ENCODE measurements at regions of chr1 and their contacts with region 1.

Region 1: GRCh38 chr1:61043010-61043820 is 39.1 kb upstream of the NFIA start:
- DNase-seq: peak; percentile 62
- H3K4me3 ChIP-seq: peak overlapping the region; percentile 52 to 56 (median 56)
- H3K27ac ChIP-seq: no peak overlapping the region
- H3K4me1 ChIP-seq: peaks cover 14% of the 10 kb centered on the region
- H3K27me3 ChIP-seq: no peaks in the 10 kb centered on the region
- CTCF ChIP-seq: peak; percentile 65 to 90

Region 2: GRCh38 chr1:59971464-59971911 is 1071.7 kb before region 1 on chr1:
- CTCF ChIA-PET with region 1: no interaction called
- dilution Hi-C with region 1: no loop called
- in situ Hi-C with region 1: no loop called
- intact Hi-C with region 1: loop called (anchors 2 kb)
- DNase-seq: peak; percentile 55
- H3K4me3 ChIP-seq: no peak overlapping the region
- H3K27ac ChIP-seq: no peak overlapping the region
- H3K4me1 ChIP-seq: no peaks in the 10 kb centered on the region
- H3K27me3 ChIP-seq: peaks cover 7% of the 10 kb centered on the region
- CTCF ChIP-seq: peak; percentile 83 to 93

Region 3: DNA sequence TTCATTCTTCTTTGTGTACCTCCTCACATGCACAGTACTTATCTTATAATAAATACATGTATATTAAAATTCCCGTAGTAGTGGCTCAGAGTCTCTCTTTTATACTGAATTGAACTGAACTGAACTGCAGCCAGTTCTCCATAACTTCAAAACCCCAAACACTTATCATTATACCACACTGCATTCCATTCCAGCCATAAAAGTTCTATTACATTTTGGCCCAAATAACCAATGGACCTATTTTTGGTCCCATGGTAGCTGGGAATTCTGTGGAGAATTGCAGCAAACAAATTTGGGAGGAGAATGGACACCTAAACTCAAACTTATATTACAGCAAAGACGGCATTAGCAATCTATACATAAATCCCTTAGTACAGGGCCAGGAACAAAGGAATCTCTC is 883.1 kb before region 1 on chr1:
- CTCF ChIA-PET with region 1: no interaction called
- dilution Hi-C with region 1: no loop called
- in situ Hi-C with region 1: no loop called
- intact Hi-C with region 1: loop called (anchors 1 kb)
- DNase-seq: no peak
- H3K4me3 ChIP-seq: no peak overlapping the region
- H3K27ac ChIP-seq: no peak overlapping the region
- H3K4me1 ChIP-seq: no peaks in the 10 kb centered on the region
- H3K27me3 ChIP-seq: peaks cover 14% of the 10 kb centered on the region
- CTCF ChIP-seq: no peak

Region 4: GRCh38 chr1:60848583-60849188 is 194.5 kb before region 1 on chr1:
- CTCF ChIA-PET with region 1: no interaction called
- dilution Hi-C with region 1: no loop called
- in situ Hi-C with region 1: no loop called
- intact Hi-C with region 1: loop called (anchors 1 kb)
- DNase-seq: peak; percentile 20
- H3K4me3 ChIP-seq: no peak overlapping the region
- H3K27ac ChIP-seq: no peak overlapping the region
- H3K4me1 ChIP-seq: peaks cover 5% of the 10 kb centered on the region
- H3K27me3 ChIP-seq: no peaks in the 10 kb centered on the region
- CTCF ChIP-seq: peak; percentile 45 to 71

Region 5: DNA sequence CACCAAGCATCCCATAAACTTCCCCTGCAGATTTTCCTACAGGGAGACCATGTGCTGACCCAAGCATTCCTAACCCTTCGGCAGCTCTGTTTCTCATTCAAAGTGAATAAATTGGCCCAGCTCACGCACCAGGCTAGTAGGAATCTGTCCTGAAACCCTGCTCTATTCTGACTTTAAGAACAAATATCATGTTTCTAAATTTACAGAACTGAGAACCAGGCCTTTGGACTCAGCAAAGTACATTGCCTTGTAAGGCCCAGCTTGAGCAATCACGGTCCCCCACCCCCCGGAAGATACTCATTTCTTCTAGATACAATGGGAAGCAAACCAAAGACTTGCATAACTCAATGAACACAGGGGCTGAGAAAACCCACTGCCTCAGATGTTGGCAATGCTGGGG is 120.9 kb before region 1 on chr1:
- CTCF ChIA-PET with region 1: no interaction called
- dilution Hi-C with region 1: no loop called
- in situ Hi-C with region 1: no loop called
- intact Hi-C with region 1: no loop called
- DNase-seq: no peak
- H3K4me3 ChIP-seq: no peak overlapping the region
- H3K27ac ChIP-seq: no peak overlapping the region
- H3K4me1 ChIP-seq: no peaks in the 10 kb centered on the region
- H3K27me3 ChIP-seq: no peaks in the 10 kb centered on the region
- CTCF ChIP-seq: no peak

Region 6: GRCh38 chr1:60969971-60970509 is 73.2 kb before region 1 on chr1:
- CTCF ChIA-PET with region 1: no interaction called
- dilution Hi-C with region 1: no loop called
- in situ Hi-C with region 1: loop called (anchors 5 to 10 kb)
- intact Hi-C with region 1: loop called (anchors 2 kb)
- DNase-seq: peak; percentile 46
- H3K4me3 ChIP-seq: no peak overlapping the region
- H3K27ac ChIP-seq: no peak overlapping the region
- H3K4me1 ChIP-seq: peaks cover 33% of the 10 kb centered on the region
- H3K27me3 ChIP-seq: no peaks in the 10 kb centered on the region
- CTCF ChIP-seq: peak; percentile 47 to 52

Region 7: DNA sequence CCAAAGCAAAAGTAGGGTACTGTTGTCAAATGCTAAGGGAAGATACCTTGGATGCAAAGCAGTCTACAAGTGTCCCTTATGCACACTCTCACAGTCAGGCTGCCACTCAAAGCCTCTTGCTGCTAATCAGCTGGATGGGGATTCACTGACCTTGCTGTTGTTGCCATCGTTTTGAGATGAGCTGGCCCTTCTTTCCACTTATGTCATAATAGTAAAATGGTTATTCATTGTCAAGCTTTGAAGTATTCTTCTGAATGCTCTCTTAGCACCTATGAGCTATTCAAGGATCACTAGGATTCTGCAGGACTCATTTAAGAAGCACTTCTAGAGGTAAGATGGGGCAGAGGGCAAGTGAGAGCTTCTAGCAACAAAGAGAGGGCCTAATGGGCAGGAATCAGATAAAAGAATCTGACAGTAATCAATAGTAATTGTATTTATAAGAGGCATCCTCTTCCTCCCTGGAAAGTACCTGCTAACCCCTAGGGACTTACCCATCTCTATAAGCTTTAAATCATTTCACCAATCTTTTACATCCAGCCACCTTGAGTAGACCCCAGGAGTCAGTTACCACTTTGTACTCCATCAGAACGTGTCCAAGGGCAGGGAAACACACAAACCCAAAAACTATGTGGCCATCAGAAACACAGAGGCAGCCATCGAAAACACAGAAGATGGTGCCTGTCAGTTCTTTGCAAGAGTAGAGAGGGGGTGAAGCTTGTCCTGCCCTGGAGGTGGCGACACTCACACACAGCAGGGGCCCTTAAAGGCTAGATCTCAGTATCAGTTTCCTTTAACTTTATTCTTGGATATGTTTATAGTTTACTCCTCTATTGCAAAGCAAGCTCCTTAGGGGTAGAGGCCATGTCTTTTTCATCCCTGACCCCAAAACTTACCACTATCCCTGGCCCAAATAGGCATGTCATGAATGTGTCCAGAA is 64.5 kb before region 1 on chr1:
- CTCF ChIA-PET with region 1: no interaction called
- dilution Hi-C with region 1: no loop called
- in situ Hi-C with region 1: loop called (anchors 5 to 10 kb)
- intact Hi-C with region 1: loop called (anchors 1 kb)
- DNase-seq: peak; percentile 38
- H3K4me3 ChIP-seq: no peak overlapping the region
- H3K27ac ChIP-seq: no peak overlapping the region
- H3K4me1 ChIP-seq: peaks cover 4% of the 10 kb centered on the region
- H3K27me3 ChIP-seq: no peaks in the 10 kb centered on the region
- CTCF ChIP-seq: peak; percentile 89 to 90

Region 8: DNA sequence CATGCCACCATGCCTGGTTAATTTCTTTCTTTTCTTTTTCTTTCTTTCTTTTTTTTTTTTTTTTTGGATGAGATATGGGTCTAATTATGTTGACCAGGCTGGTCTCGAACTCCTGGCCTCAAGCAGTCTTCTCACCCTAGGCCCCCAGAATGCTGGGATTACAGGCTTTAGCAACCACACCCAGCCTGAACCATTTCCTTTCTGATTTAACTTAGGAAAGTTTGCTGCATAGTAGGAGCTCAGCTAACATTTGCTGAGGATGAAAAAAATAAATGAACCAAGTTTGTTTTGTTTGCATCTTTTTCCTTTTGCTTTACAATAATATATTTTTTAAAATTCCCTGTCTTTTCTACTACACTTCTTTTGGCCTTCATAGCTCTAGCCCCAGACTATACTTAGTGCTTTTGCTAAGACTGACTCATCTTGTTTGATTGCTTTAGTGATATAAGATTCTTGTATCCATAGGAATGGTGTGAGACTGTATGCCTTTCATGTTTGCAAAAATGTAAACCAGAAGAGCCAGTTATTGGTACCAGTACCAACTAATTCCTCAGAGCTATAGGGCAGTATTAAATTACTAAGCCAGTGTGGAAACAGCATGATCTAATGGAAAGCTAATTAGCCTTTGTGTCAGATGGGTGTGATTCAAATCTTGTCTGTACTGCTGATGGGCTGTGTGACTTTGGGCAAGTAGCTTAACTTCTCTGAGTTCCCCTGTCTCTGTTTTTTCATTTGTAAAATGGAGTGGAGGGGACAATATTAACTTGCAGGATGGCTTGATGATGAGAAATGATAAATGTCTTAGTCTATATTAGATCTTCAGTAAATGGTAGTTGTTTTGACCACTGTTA is 106.0 kb after region 1 on chr1:
- CTCF ChIA-PET with region 1: interaction called, 10 read pairs
- dilution Hi-C with region 1: no loop called
- in situ Hi-C with region 1: no loop called
- intact Hi-C with region 1: no loop called
- DNase-seq: peak; percentile 76
- H3K4me3 ChIP-seq: no peak overlapping the region
- H3K27ac ChIP-seq: no peak overlapping the region
- H3K4me1 ChIP-seq: peaks cover 6% of the 10 kb centered on the region
- H3K27me3 ChIP-seq: no peaks in the 10 kb centered on the region
- CTCF ChIP-seq: no peak